ENCODE measurements at regions of chr3 and their contacts with region 1.

Region 1: GRCh38 chr3:186746008-186746407 is 28.8 kb downstream of the KNG1 start:
- DNase-seq: peak in 1 of 2 experiments; percentile 50
- H3K4me3 ChIP-seq: no peak overlapping the region
- H3K4me1 ChIP-seq: no peaks in the 10 kb centered on the region
- H3K27me3 ChIP-seq: no peaks in the 10 kb centered on the region

Region 2: GRCh38 chr3:185613016-185613415 is 1133.0 kb before region 1 on chr3:
- in situ Hi-C with region 1: no loop called
- DNase-seq: no peak
- H3K4me3 ChIP-seq: no peak overlapping the region
- H3K4me1 ChIP-seq: no peaks in the 10 kb centered on the region
- H3K27me3 ChIP-seq: no peaks in the 10 kb centered on the region

Region 3: GRCh38 chr3:186625600-186626042 is 120.4 kb before region 1 on chr3:
- in situ Hi-C with region 1: loop called (anchors 10 kb)
- DNase-seq: no peak
- H3K4me3 ChIP-seq: no peak overlapping the region
- H3K4me1 ChIP-seq: no peaks in the 10 kb centered on the region
- H3K27me3 ChIP-seq: peaks cover 6% of the 10 kb centered on the region; the same call in 1 of the 2 replicates

Region 4: GRCh38 chr3:186965141-186965879 is 219.3 kb after region 1 on chr3:
- in situ Hi-C with region 1: no loop called
- DNase-seq: peak; percentile 27 to 44
- H3K4me3 ChIP-seq: no peak overlapping the region
- H3K4me1 ChIP-seq: peaks cover 11% of the 10 kb centered on the region
- H3K27me3 ChIP-seq: no peaks in the 10 kb centered on the region

Measured in HAP-1 (cell line).